ENCODE measurements at regions of chr19 and their contacts with region 1.

Region 1: DNA sequence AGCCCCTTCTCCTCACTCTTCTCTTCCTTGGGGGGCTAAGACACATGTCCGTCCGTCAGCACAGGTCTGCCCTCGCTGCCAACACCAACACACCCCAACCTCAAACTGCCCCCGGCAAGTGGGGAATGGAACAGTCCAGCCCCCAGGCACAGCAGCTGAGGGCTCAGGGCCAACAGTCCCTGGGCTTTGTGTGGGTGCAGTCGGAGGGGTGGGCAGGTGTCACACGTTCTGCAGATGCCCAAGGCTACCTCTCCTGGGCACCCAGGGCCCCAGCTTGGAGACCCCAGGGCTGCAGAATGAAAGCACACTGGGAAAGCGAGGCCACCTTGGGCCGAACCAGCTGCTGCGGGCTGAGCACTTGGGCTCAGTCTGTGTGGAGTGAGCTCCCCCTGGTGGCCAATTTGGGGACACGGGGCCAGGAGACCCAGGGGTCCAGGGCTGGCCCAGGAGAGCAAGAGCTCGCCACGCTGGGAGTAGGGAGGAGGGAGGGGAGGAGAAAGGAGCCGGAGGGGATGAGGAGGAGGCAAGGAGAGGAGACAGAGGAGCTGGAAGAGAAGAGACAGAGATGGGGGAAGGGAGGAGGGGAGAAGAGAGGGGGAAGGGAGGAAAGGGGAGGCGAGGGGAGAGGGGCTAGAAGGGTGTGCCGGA is 14.0 kb upstream of the ATP8B3 start:
- DNase-seq: peak; percentile 97
- H3K4me3 ChIP-seq: no peak overlapping the region; a peak in 1 of 4 replicates
- H3K27ac ChIP-seq: no peak overlapping the region
- H3K4me1 ChIP-seq: peaks cover 0 to 7% of the 10 kb centered on the region in 2 experiments; a peak in 1 of 4 replicates
- H3K27me3 ChIP-seq: no peaks in the 10 kb centered on the region
- CTCF ChIP-seq: peak; percentile 96
- EP300 ChIP-seq: no peak
- RAD21 ChIP-seq: peak; percentile 74

Region 2: DNA sequence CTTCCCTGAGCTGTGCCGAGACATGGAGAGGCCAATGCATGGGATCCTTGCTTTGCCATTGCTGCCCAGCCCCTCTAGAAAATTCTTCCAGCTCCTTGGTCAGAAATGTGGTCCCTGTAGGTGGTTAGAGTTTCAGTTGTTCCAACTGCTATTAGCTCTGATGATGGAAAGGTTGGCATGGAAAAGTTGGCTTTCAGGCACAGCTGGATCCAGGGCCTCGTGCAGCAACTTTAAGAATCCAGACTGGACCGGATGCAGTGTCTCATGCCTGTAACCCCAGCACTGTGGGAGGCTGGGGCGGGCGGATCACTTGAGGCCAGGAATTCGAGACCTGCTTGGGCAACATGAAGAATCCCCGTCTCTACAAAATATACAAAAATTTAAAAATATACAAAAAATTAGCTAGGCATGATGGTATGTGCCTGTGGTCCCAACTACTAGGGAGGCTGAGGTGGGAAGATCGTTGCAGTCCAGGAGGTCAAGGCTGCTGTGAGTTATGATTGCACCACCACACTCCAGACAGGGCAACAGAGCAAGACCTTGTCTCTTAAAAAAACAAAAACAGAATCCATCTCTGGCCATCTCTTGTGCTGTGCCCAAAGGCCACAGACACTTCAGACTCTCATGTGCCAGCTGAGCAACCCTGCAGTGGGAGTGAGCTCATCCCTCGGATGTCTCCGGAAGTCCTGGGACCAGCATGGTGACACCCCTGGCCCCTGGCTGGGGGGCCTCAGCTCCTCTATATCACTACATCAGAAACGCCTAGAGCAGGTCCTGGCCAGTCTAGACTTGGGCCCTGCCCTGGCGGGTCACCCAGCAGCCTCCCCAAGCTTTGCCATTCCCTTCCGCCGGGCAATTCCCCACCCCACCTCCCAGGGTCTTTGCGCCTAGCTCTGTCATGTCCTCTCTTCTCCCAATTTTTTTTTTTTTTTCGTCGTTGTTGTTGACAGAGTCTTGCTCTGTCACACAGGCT is 274.7 kb before region 1 on chr19:
- CTCF ChIA-PET with region 1: interaction called, 12 read pairs
- POLR2A ChIA-PET with region 1: no interaction called
- DNase-seq: no peak
- H3K4me3 ChIP-seq: no peak overlapping the region
- H3K27ac ChIP-seq: no peak overlapping the region
- H3K4me1 ChIP-seq: no peaks in the 10 kb centered on the region; a peak in 1 of 4 replicates
- H3K27me3 ChIP-seq: no peaks in the 10 kb centered on the region
- CTCF ChIP-seq: no peak
- EP300 ChIP-seq: no peak
- RAD21 ChIP-seq: no peak

Region 3: GRCh38 chr19:1767464-1767933 is 58.5 kb before region 1 on chr19:
- CTCF ChIA-PET with region 1: interaction called, 17 read pairs
- POLR2A ChIA-PET with region 1: no interaction called
- DNase-seq: peak; percentile 96
- H3K4me3 ChIP-seq: no peak overlapping the region
- H3K27ac ChIP-seq: no peak overlapping the region
- H3K4me1 ChIP-seq: no peaks in the 10 kb centered on the region
- H3K27me3 ChIP-seq: peaks cover 61% of the 10 kb centered on the region
- CTCF ChIP-seq: peak; percentile 92
- EP300 ChIP-seq: no peak
- RAD21 ChIP-seq: peak; percentile 69

Region 4: GRCh38 chr19:1789261-1790041 is 36.6 kb before region 1 on chr19:
- CTCF ChIA-PET with region 1: interaction called, 51 read pairs
- POLR2A ChIA-PET with region 1: interaction called, 4 read pairs
- DNase-seq: peak; percentile 67
- H3K4me3 ChIP-seq: no peak overlapping the region; a peak in 1 of 4 replicates
- H3K27ac ChIP-seq: no peak overlapping the region
- H3K4me1 ChIP-seq: no peaks in the 10 kb centered on the region; a peak in 1 of 4 replicates
- H3K27me3 ChIP-seq: peaks cover 23% of the 10 kb centered on the region
- CTCF ChIP-seq: no peak
- EP300 ChIP-seq: no peak
- RAD21 ChIP-seq: no peak

Region 5: DNA sequence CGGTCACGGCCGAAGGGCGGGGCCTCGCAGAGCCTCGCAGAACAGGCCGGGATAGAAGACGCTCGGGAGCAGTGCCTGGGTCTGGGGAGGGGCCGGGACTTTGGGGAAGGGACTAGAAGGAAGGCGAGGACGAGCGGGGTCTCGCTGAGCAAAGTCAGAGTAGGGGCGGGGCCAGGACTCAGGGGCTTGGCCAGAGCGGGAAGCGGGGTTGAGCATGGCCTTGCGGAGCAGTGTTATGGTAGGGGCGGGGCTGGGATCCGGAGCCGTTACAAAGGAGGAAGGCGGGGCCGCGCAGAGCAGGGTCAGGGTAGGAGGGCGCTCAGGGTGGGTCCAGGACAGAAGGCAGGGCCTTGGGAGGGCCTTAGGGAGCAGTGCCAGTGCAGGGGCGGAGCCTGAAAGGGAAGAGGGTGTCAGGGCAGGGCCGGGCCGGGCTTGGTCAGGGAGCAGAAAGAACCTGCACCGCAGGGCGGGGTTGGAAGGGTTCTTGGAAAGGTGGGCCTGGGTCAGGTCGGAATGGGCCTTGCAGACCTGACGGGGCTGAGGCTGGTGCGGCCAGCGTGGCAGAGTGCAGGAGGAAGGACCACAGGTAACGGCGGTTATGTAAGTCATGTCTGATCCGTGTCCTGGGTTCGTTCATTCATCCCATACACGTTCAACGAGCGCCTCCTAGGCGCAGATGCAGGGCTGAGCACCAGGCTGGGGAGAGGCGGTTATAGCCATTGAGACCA is 13.4 kb before region 1 on chr19:
- CTCF ChIA-PET with region 1: interaction called, 33 read pairs
- POLR2A ChIA-PET with region 1: interaction called, 3 read pairs
- DNase-seq: peak; percentile 96
- H3K4me3 ChIP-seq: peak overlapping the region; percentile 54 to 71
- H3K27ac ChIP-seq: peak overlapping the region; percentile 69 to 72
- H3K4me1 ChIP-seq: peaks cover 0 to 14% of the 10 kb centered on the region in 2 experiments; a peak in 1 of 4 replicates
- H3K27me3 ChIP-seq: no peaks in the 10 kb centered on the region
- CTCF ChIP-seq: peak; percentile 69
- EP300 ChIP-seq: no peak
- RAD21 ChIP-seq: peak; percentile 78

Measured in SK-N-SH (cell line).